Right cardiac atrium (tissue), 5 donors: ENCODE measurements at regions of chr10 and their contacts with region 1.

Region 1: DNA sequence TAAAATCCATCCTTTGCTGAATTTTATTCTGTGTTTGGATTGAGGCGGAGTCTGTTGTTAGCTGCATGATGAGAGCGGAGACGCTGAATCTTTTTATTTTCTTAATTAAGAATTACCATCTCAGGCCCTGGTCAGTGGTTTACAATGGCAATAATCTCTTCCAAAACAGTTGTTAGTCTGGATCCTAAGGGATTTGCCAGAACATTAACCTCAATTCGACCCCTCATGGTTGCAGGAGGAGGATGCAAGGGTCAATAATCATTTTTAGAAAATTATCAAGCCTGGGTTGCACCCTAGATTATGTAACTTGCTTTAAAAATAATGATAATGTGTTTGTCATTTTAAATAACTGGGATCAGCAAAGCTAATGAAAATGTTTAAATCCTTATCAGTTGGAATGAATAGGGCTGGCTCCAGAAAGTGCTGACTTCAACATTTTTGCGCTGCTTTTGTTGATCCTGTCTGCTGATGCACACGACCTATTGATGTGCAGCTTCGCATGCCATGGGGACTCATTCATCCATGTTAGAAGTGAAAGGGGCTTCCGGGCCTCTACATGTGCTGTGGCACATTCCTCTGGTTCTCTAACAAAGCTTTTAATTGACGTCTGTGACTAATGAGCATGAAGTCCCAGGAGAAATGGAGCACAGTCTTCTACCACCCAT is 80.7 kb upstream of the KIAA1217 start:
- DNase-seq: no peak
- ATAC-seq: peak in 1 of 2 donors; percentile 11
- H3K4me3 ChIP-seq: no peak overlapping the region
- H3K27ac ChIP-seq: no peak overlapping the region
- H3K4me1 ChIP-seq: no peaks in the 10 kb centered on the region
- H3K27me3 ChIP-seq: no peaks in the 10 kb centered on the region

Region 2: DNA sequence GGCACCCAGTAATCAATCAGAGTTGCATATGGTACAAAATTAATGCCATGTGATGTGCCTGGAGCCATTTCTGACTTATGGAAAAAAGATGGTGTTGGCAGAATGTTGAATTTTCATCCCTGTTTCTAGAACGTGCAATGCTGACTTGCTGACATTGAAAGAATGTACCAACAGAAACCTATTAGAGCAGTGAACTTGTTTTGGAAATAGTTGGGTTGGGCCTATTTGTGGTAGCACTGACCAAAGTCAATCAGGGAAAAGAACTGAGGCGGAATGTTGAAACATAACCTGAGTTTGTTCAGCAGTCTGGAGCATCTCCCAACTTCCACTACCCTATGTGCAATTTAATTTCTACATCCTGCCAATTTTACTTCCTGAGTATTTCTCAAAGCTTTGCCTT is 69.1 kb after region 1 on chr10:
- intact Hi-C with region 1: loop called in 1 of 4 experiments (anchors 10 kb)
- DNase-seq: no peak
- ATAC-seq: no peak
- H3K4me3 ChIP-seq: no peak overlapping the region
- H3K27ac ChIP-seq: no peak overlapping the region
- H3K4me1 ChIP-seq: no peaks in the 10 kb centered on the region
- H3K27me3 ChIP-seq: no peaks in the 10 kb centered on the region

Region 3: DNA sequence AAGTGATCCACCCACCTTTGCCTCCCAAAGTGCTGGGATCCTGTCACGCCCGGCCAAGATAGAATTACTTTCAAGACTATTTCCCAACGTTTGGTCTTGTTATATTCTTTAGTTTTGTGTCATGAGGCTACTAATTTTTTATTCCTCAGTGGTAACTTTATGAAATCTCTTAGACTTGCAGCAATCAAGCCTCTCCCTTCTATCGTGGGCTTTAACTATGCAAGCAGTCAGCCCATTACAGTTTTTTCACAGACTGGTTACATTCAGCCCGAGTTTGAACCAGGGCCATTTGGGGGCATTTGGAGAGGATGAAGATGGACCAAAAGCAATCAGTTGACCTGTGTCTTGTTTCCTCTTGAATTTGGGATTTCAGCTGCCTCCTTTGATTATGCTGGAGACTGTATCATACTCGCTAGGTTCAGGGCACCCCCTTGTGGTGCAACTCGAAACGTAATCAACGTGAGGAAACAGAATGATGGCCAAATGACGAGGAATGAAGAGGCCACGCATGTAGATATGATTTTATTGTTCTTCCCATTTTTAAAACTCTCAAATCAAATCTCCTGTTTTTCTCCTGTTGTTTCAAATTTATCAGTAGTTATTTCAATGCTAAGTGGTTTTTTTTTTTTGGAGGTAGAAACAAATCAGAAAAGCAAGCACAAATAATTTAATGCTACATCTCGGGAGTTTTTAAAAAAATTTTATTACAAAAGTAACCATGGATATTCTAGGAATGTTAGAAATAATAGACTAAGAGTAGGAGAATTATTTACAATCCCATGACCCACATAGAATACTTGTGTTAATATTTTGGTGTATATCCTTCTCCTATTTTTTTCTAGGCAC is 232.3 kb after region 1 on chr10:
- intact Hi-C with region 1: no loop called
- DNase-seq: peak; percentile 71 to 89 (median 81)
- ATAC-seq: peak; percentile 72 to 75
- H3K4me3 ChIP-seq: no peak overlapping the region
- H3K27ac ChIP-seq: no peak overlapping the region
- H3K4me1 ChIP-seq: no peaks in the 10 kb centered on the region
- H3K27me3 ChIP-seq: no peaks in the 10 kb centered on the region

Region 4: GRCh38 chr10:24952143-24952706 is 824.0 kb after region 1 on chr10 and contains the start of gene PRTFDC1:
- intact Hi-C with region 1: no loop called
- DNase-seq: peak; percentile 55 to 87 (median 85)
- ATAC-seq: peak; percentile 58
- H3K4me3 ChIP-seq: peak within 1 kb of the TSS; percentile 82
- H3K27ac ChIP-seq: peak within 1 kb of the TSS; percentile 61
- H3K4me1 ChIP-seq: peaks cover 7% of the 10 kb centered on the region
- H3K27me3 ChIP-seq: no peaks in the 10 kb centered on the region
- total RNA-seq, gene PRTFDC1: 8.6 to 11.2 (median 10.6) TPM